Activated CD4-positive, alpha-beta T cell treated with anti-CD3 and anti-CD28 coated beads for 36 hours (primary cell): ENCODE measurements at regions of chr3 and their contacts with region 1.

Region 1: GRCh38 chr3:97821810-97822775 is at the start of gene CRYBG3:
- DNase-seq: peak; percentile 90
- ATAC-seq: peak; percentile 99
- H3K4me3 Mint-ChIP-seq: peak within 1 kb of the TSS; percentile 82
- H3K27ac Mint-ChIP-seq: peak within 1 kb of the TSS; percentile 66
- H3K4me1 Mint-ChIP-seq: peaks cover 18% of the 10 kb centered on the region
- H3K27me3 Mint-ChIP-seq: peaks cover 26% of the 10 kb centered on the region
- total RNA-seq, gene CRYBG3: 4.2 to 4.9 TPM

Region 2: DNA sequence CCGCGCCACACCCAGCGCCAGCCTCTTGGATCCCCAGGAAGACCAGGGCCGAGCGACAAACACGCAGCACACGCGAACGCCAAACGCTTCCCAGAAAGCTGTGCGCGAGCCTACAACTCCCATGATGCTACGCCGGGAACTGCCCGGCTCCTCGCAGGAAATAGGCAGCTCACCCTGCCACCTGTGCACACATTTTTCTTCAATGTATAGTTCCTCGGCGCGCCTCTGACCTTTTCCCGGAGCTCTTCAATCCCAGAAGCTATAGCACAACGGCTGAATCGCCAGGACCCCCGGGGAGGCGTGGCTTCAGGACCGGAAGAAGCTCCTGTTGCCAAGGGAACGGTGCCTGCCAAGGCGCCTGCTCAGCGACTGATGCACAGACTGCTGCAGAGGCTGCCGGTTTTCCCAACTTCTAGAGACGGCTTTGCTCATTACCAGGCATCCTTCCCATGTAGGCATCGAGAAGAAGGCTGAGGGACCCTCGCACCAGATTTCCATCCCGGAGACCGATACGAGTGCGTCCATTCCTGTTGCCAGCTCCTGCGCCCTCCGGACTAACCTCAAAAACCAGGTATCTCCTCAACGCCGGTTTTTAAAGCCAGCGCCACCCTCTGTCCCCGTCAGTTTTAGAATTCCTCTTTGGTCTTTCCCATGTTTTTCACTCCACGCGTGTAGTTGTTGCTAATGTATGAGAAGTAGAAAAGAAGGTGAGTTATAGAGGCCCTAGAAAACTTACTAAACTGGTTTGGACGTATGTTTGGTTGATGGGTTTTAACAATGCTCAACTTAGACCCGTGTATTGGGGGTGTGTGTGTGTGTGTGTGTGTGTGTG is 57.5 kb before region 1 on chr3 and contains the start of gene ARL6:
- CTCF ChIA-PET with region 1: no interaction called
- POLR2A ChIA-PET with region 1: no interaction called
- intact Hi-C with region 1: loop called (anchors 1 to 5 kb)
- DNase-seq: peak; percentile 86
- ATAC-seq: peak; percentile 95
- H3K4me3 Mint-ChIP-seq: peak within 1 kb of the TSS; percentile 97
- H3K27ac Mint-ChIP-seq: peak within 1 kb of the TSS; percentile 97
- H3K4me1 Mint-ChIP-seq: peaks cover 25% of the 10 kb centered on the region
- H3K27me3 Mint-ChIP-seq: no peaks in the 10 kb centered on the region
- total RNA-seq, gene ARL6: 6.9 TPM

Region 3: GRCh38 chr3:97793420-97794019 is 28.6 kb before region 1 on chr3:
- CTCF ChIA-PET with region 1: interaction called, 3 read pairs
- POLR2A ChIA-PET with region 1: interaction called, 3 read pairs
- intact Hi-C with region 1: loop called in 1 of 2 experiments (anchors 1 kb)
- DNase-seq: no peak
- ATAC-seq: peak; percentile 60
- H3K4me3 Mint-ChIP-seq: no peak overlapping the region
- H3K27ac Mint-ChIP-seq: no peak overlapping the region
- H3K4me1 Mint-ChIP-seq: no peaks in the 10 kb centered on the region
- H3K27me3 Mint-ChIP-seq: no peaks in the 10 kb centered on the region

Region 4: GRCh38 chr3:97871801-97872524 is 49.9 kb after region 1 on chr3:
- CTCF ChIA-PET with region 1: no interaction called
- POLR2A ChIA-PET with region 1: no interaction called
- intact Hi-C with region 1: loop called in 1 of 2 experiments (anchors 2 kb)
- DNase-seq: peak; percentile 57
- ATAC-seq: peak; percentile 93
- H3K4me3 Mint-ChIP-seq: peak overlapping the region; percentile 28
- H3K27ac Mint-ChIP-seq: peak overlapping the region; percentile 86
- H3K4me1 Mint-ChIP-seq: peaks cover 22% of the 10 kb centered on the region
- H3K27me3 Mint-ChIP-seq: no peaks in the 10 kb centered on the region

Region 5: DNA sequence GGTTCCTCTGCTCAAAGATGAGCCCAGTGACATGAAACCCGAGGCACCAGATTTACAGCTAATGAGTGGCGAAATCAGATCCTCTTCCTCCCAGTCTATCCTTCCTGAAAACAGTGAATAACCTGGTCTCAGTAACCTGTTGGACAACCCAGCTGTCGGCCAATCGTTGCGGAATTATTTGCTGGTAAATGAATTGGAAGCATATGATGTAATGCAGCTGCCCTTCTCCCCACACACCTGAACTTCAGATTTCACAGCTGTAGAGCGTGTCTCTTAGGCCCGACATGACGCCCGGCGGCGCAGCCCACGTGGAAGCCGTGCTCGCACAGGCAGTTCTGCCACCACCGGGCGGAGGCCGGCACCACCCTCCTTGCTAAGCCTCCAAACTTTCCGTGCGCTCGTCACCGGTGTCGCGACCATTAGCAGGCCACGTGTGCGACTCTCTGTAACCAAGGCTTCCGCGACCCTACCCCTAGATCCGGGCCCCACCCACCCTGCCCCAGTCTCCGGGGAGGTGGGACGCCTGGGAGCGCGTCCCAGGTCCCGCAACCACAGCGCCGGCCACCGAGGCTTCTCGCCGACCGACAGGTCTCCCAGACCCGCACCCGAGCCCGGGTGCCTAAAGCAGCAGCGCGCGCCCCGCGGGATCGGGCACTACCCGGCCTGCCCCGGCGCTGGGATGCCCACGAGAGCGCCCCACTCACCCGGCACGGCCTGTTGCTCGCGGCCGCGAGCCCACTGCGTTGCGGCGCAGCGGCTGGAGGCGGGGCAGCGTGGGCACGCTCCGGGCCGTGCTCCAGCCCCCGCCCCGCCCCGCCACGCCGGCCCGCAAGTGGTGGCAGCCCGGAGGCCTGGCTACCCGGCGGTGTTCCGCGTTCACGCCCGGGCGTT is 149.8 kb after region 1 on chr3 and contains the start of gene RIOX2:
- CTCF ChIA-PET with region 1: interaction called, 3 read pairs
- POLR2A ChIA-PET with region 1: no interaction called
- intact Hi-C with region 1: loop called (anchors 1 to 2 kb)
- DNase-seq: peak; percentile 90
- ATAC-seq: peak; percentile 89
- H3K4me3 Mint-ChIP-seq: peak within 1 kb of the TSS; percentile 83
- H3K27ac Mint-ChIP-seq: peak within 1 kb of the TSS; percentile 90
- H3K4me1 Mint-ChIP-seq: peaks cover 46% of the 10 kb centered on the region
- H3K27me3 Mint-ChIP-seq: no peaks in the 10 kb centered on the region
- total RNA-seq, gene RIOX2: 35.0 to 35.5 TPM